HEK293 (cell line): ENCODE measurements at regions of chr5 and their contacts with region 1.

Region 1: GRCh38 chr5:33299621-33300208 is 141.1 kb upstream of the TARS1 start:
- H3K4me3 ChIP-seq: no peak overlapping the region
- H3K27ac ChIP-seq: no peak overlapping the region
- H3K4me1 ChIP-seq: peaks cover 6% of the 10 kb centered on the region
- CTCF ChIP-seq: peak; percentile 52

Region 2: GRCh38 chr5:33310451-33310850 is 10.7 kb after region 1 on chr5:
- CTCF ChIA-PET with region 1: interaction called, 12 read pairs
- POLR2A ChIA-PET with region 1: no interaction called
- H3K4me3 ChIP-seq: no peak overlapping the region
- H3K27ac ChIP-seq: no peak overlapping the region
- H3K4me1 ChIP-seq: no peaks in the 10 kb centered on the region
- CTCF ChIP-seq: no peak

Region 3: DNA sequence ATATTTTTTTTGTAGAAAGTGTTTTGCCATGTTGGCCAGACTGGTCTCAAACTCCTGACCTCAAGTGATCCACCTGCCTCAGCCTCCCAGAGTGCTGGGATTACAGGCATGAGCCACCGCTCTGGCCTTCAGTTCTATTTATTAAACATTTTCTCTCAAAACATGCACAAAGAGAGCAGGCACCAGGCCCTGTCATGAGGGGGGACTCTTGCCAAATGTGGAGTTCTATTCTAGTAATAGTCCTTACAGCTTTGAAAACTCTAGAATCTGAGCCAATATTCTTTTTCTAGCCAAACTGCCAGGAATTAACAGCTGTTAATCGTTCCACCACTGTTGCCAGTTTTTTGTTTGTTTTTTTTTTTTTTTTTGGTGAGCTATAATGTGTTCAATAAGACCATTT is 265.6 kb after region 1 on chr5:
- CTCF ChIA-PET with region 1: no interaction called
- POLR2A ChIA-PET with region 1: no interaction called
- H3K4me3 ChIP-seq: no peak overlapping the region
- H3K27ac ChIP-seq: no peak overlapping the region
- H3K4me1 ChIP-seq: no peaks in the 10 kb centered on the region
- CTCF ChIP-seq: no peak